ENCODE measurements at regions of chr20 and their contacts with region 1.

Region 1: DNA sequence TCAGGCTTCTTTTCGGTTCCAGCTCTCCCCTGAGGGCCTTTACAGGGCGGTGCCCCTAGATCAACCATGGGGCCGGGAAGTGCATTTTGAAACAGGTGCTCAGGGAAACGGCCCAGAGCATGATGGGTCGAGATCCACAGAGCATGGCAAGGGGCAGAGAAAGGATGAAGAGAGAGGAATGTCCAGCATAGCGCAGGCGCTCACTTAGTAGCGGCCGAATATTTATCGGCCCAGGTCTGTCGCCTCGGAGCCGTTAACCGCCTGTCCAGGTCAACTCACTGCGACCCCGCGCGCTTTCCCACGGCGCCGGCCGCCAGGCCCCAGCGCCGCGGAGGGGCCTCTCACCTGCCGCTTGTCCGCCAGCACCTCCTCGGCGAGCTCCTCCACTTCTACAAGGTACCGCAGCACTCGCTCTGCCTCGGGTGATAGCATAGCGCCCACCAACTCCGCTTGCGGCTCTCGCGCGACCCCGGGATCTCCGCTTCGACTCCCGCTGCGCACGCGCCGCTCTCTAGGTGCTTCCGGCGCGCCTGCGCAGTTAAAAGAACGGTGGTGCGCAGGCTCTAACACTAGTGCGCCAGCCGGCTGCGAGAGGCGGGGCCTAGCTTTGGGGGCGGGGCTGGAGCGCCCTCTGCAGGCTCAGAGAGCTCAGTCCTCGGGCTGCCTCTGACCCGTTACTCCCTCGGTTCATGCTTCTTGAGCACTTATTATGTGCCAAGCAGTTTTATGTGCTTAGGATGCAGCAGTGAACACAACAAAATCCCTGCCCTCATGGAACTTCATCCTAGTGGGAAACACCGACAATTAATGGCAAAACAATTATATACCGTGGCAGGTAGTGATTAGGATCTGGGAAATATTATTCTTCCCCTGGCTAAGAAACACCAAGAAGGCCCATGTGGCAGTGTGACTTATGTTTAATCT is at the start of gene PDRG1:
- DNase-seq: peak; percentile 94 to 98 (median 97)
- ATAC-seq: peak; percentile 92
- H3K4me3 ChIP-seq: peak within 1 kb of the TSS; percentile 63
- H3K27ac ChIP-seq: peak within 1 kb of the TSS; percentile 68
- H3K4me1 ChIP-seq: peaks cover 16 to 17% of the 10 kb centered on the region in 2 experiments
- H3K27me3 ChIP-seq: no peaks in the 10 kb centered on the region; a peak in 1 of 5 replicates
- CTCF ChIP-seq: peak; percentile 91 to 97 (median 95)
- EP300 ChIP-seq: no peak
- POLR2A ChIP-seq: peak; percentile 85
- RAD21 ChIP-seq: peak; percentile 96
- polyA plus RNA-seq, gene PDRG1: 38.5 to 58.6 TPM

Region 2: GRCh38 chr20:31856516-31856915 is 95.3 kb before region 1 on chr20:
- CTCF ChIA-PET with region 1: interaction called, 49 read pairs
- POLR2A ChIA-PET with region 1: interaction called, 3 read pairs
- in situ Hi-C with region 1: loop called (anchors 5 kb)
- intact Hi-C with region 1: loop called (anchors 1 kb)
- DNase-seq: no peak
- ATAC-seq: no peak
- H3K4me3 ChIP-seq: no peak overlapping the region
- H3K27ac ChIP-seq: no peak overlapping the region
- H3K4me1 ChIP-seq: peaks cover 0 to 13% of the 10 kb centered on the region in 2 experiments; a peak in 3 of 5 replicates
- H3K27me3 ChIP-seq: peaks cover 24 to 55% of the 10 kb centered on the region in 2 experiments
- CTCF ChIP-seq: no peak
- EP300 ChIP-seq: no peak
- POLR2A ChIP-seq: no peak
- RAD21 ChIP-seq: no peak

Region 3: GRCh38 chr20:31918466-31919105 is 33.2 kb before region 1 on chr20:
- CTCF ChIA-PET with region 1: no interaction called
- POLR2A ChIA-PET with region 1: interaction called, 4 read pairs
- in situ Hi-C with region 1: no loop called
- intact Hi-C with region 1: loop called (anchors 5 kb)
- DNase-seq: no peak
- ATAC-seq: no peak
- H3K4me3 ChIP-seq: no peak overlapping the region
- H3K27ac ChIP-seq: no peak overlapping the region
- H3K4me1 ChIP-seq: peaks cover 16 to 19% of the 10 kb centered on the region in 2 experiments
- H3K27me3 ChIP-seq: peaks cover 0 to 42% of the 10 kb centered on the region in 2 experiments; a peak in 4 of 5 replicates
- CTCF ChIP-seq: no peak
- EP300 ChIP-seq: no peak
- POLR2A ChIP-seq: no peak
- RAD21 ChIP-seq: no peak

Region 4: GRCh38 chr20:31968291-31969126 is 16.7 kb after region 1 on chr20:
- CTCF ChIA-PET with region 1: no interaction called
- POLR2A ChIA-PET with region 1: interaction called, 11 read pairs
- in situ Hi-C with region 1: no loop called
- intact Hi-C with region 1: no loop called
- DNase-seq: peak; percentile 85 to 96 (median 94)
- ATAC-seq: peak; percentile 98
- H3K4me3 ChIP-seq: peak overlapping the region; percentile 4; the same call in 1 of the 2 replicates
- H3K27ac ChIP-seq: no peak overlapping the region
- H3K4me1 ChIP-seq: peaks cover 0 to 11% of the 10 kb centered on the region in 2 experiments; a peak in 2 of 5 replicates
- H3K27me3 ChIP-seq: peaks cover 12 to 27% of the 10 kb centered on the region in 2 experiments; a peak in 4 of 5 replicates
- CTCF ChIP-seq: no peak
- EP300 ChIP-seq: no peak
- POLR2A ChIP-seq: no peak
- RAD21 ChIP-seq: no peak

Region 5: GRCh38 chr20:32031007-32031958 is 79.5 kb after region 1 on chr20:
- CTCF ChIA-PET with region 1: no interaction called
- POLR2A ChIA-PET with region 1: no interaction called
- in situ Hi-C with region 1: no loop called
- intact Hi-C with region 1: loop called (anchors 5 kb)
- DNase-seq: peak; percentile 67 to 72 (median 72)
- ATAC-seq: peak; percentile 82
- H3K4me3 ChIP-seq: no peak overlapping the region
- H3K27ac ChIP-seq: no peak overlapping the region
- H3K4me1 ChIP-seq: peaks cover 0 to 11% of the 10 kb centered on the region in 2 experiments; a peak in 4 of 5 replicates
- H3K27me3 ChIP-seq: peaks cover 6 to 49% of the 10 kb centered on the region in 2 experiments; a peak in 4 of 5 replicates
- CTCF ChIP-seq: peak; percentile 92 to 98 (median 98)
- EP300 ChIP-seq: no peak
- POLR2A ChIP-seq: no peak
- RAD21 ChIP-seq: peak; percentile 86 to 87